ENCODE measurements at regions of chr3 and their contacts with region 1.

Region 1: DNA sequence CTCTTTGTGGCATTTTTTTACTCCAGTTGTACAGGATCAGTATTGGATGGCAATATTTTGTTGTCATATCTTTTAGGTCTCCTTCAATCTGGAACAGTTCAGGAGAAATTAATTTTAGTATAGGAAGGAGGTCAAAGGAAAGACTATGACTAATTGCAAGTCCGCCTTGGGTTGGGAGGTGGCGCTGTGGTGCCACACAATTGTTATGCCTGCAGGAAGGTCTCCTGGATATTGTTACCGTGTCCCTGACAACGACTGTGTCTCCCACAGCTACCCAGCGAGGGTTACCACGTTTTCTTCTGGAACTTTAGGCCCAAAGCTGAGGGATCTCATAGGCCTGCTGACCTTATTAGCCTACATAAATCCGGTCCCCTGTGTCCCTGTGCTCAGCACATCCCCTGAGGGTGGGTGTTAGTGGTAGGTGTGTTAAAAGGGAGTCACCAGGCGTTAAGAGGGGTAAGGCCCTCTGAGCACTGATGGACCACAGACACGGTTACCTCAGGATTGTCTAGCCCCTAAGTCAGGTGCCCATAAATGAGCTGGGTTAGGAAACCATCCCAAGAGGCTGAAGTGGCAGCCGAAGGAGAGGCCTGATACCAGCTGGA is 31.5 kb downstream of the KCNAB1 start:
- DNase-seq: peak; percentile 69
- H3K4me3 Mint-ChIP-seq: no peak overlapping the region
- H3K27ac Mint-ChIP-seq: no peak overlapping the region
- H3K4me1 Mint-ChIP-seq: no peaks in the 10 kb centered on the region
- H3K27me3 Mint-ChIP-seq: no peaks in the 10 kb centered on the region
- CTCF ChIP-seq: peak; percentile 74

Region 2: GRCh38 chr3:155995525-155996351 is 156.2 kb before region 1 on chr3:
- CTCF ChIA-PET with region 1: no interaction called
- POLR2A ChIA-PET with region 1: no interaction called
- intact Hi-C with region 1: loop called (anchors 1 kb)
- DNase-seq: peak; percentile 59
- H3K4me3 Mint-ChIP-seq: no peak overlapping the region
- H3K27ac Mint-ChIP-seq: no peak overlapping the region
- H3K4me1 Mint-ChIP-seq: no peaks in the 10 kb centered on the region
- H3K27me3 Mint-ChIP-seq: peaks cover 7% of the 10 kb centered on the region
- CTCF ChIP-seq: peak; percentile 40

Region 3: DNA sequence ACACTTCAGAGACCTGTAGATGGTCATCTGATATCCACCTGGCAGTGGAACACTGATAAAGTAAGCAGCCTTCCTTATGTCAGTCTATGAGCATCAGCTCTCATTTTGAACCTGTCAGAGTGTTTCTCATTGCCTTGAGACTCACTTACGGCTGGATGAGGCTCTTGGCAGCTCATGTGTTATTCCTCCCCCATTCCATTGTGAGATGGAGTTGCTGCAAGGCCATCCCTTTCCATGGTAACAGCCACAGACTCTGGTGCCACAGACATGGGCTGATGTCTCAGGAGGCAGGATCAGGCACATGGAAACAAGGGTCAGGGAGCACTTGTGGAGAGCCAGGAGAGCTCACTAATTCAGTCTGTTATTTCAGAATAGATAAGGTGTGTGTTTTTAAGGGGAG is 19.6 kb before region 1 on chr3:
- CTCF ChIA-PET with region 1: interaction called, 12 read pairs
- POLR2A ChIA-PET with region 1: no interaction called
- intact Hi-C with region 1: no loop called
- DNase-seq: no peak
- H3K4me3 Mint-ChIP-seq: no peak overlapping the region
- H3K27ac Mint-ChIP-seq: no peak overlapping the region
- H3K4me1 Mint-ChIP-seq: no peaks in the 10 kb centered on the region
- H3K27me3 Mint-ChIP-seq: peaks cover 70% of the 10 kb centered on the region
- CTCF ChIP-seq: no peak

Region 4: DNA sequence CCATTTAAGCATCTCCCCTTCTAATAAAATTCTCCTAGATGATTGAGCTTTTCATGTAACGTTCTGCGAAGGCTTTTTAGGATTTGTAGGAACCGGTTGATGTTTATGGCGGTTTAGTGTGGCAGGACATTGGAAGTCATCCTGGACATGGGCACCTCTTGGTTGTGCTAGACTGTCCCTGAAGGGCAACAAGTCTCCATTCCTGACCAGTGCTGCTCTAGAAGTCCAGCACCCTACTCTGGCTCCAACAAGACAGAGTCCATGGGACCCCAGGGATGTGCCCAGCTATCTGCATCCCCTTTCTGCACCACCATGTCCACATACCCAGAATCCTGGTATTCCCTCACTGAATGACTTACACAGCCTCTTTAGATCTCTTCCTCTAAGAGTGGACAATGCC is 14.9 kb after region 1 on chr3:
- CTCF ChIA-PET with region 1: interaction called, 16 read pairs
- POLR2A ChIA-PET with region 1: no interaction called
- intact Hi-C with region 1: no loop called
- DNase-seq: no peak
- H3K4me3 Mint-ChIP-seq: no peak overlapping the region
- H3K27ac Mint-ChIP-seq: no peak overlapping the region
- H3K4me1 Mint-ChIP-seq: no peaks in the 10 kb centered on the region
- H3K27me3 Mint-ChIP-seq: peaks cover 16% of the 10 kb centered on the region
- CTCF ChIP-seq: no peak

Region 5: DNA sequence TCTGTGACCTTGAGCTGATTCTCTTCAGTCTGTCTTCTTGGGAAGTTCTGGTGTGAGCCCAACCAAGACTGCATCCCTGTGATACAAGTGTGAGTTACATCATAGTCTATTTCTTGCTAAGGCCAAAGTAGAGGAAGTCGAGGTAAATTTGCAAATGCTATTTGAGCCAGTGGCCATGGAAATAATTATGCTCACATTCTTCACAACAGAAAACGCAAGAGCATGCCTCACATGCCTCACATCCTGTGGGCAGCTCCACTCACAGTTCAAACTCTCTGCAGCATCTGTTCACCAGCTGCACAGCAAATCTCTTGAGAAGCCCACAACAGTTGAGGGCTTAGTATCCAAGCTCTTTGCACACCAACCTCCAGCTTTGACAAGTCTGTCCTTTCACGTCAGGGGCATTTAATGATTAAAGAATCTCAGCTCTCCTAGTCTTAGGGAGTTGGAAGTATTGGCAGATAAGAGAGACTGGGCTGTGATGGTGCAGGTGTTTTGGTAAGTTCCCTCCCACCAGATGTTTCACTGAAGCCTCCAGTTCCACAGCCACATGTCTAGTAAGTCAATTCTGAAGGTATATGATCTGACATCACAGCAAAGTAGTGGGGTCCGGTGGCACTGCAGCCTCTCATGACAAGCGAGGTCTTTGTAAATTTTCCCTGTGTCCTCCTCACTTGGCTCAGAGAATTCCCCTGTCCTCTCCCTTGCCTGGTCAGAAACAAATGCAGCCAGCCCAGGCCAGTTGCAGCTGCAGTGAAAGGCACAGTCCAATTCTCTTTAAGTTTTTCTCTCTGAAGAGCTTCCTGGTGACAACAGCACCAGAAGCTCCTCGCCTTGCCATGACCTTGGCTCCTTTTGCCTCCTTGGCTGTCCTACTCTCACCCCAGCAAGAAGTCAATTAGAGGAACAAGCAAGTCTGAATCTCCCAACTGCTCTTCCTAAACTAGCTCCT is 236.8 kb after region 1 on chr3:
- CTCF ChIA-PET with region 1: interaction called, 38 read pairs
- POLR2A ChIA-PET with region 1: no interaction called
- intact Hi-C with region 1: no loop called
- DNase-seq: no peak
- H3K4me3 Mint-ChIP-seq: no peak overlapping the region
- H3K27ac Mint-ChIP-seq: no peak overlapping the region
- H3K4me1 Mint-ChIP-seq: no peaks in the 10 kb centered on the region
- H3K27me3 Mint-ChIP-seq: peaks cover 97% of the 10 kb centered on the region
- CTCF ChIP-seq: no peak

Region 6: GRCh38 chr3:156449712-156450574 is 298.0 kb after region 1 on chr3:
- CTCF ChIA-PET with region 1: interaction called, 92 read pairs
- POLR2A ChIA-PET with region 1: no interaction called
- intact Hi-C with region 1: loop called (anchors 1 kb)
- DNase-seq: peak; percentile 48
- H3K4me3 Mint-ChIP-seq: no peak overlapping the region
- H3K27ac Mint-ChIP-seq: no peak overlapping the region
- H3K4me1 Mint-ChIP-seq: peaks cover 5% of the 10 kb centered on the region
- H3K27me3 Mint-ChIP-seq: peaks cover 43% of the 10 kb centered on the region
- CTCF ChIP-seq: peak; percentile 49

Region 7: DNA sequence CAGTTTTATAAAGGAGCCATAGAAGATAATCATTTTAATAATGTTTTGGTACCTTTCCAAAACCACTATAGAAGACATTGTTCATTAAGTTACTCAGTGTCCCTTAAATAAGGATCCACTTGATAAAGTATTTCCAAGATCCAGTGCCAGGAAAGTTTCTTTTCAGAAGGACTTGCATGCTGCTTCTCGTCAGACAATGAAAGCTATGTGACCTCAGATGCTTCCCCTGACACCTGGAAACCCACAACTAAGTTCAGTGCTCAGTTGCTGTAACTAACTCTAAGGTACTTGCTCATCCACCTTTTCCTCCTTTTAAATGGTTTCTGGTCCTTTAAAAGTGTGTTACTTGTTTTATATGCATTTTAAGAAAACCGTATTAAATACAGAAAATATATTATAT is 395.7 kb after region 1 on chr3:
- CTCF ChIA-PET with region 1: interaction called, 31 read pairs
- POLR2A ChIA-PET with region 1: no interaction called
- intact Hi-C with region 1: no loop called
- DNase-seq: no peak
- H3K4me3 Mint-ChIP-seq: no peak overlapping the region
- H3K27ac Mint-ChIP-seq: peak overlapping the region; percentile 30
- H3K4me1 Mint-ChIP-seq: peaks cover 22% of the 10 kb centered on the region
- H3K27me3 Mint-ChIP-seq: no peaks in the 10 kb centered on the region
- CTCF ChIP-seq: no peak

Measured in MCF 10A (cell line).